Naive thymus-derived CD4-positive, alpha-beta T cell (primary cell): ENCODE measurements at regions of chr11 and their contacts with region 1.

Region 1: GRCh38 chr11:86291466-86292262 is 10.4 kb upstream of the HIKESHI start:
- DNase-seq: peak; percentile 11 to 63 (median 49)
- ATAC-seq: peak; percentile 76
- H3K4me3 ChIP-seq: no peak overlapping the region
- H3K4me3 Mint-ChIP-seq: peak overlapping the region in 1 of 10 donors; percentile 23
- H3K27ac ChIP-seq: no peak overlapping the region
- H3K27ac Mint-ChIP-seq: peak overlapping the region in 1 of 9 donors; percentile 35
- H3K4me1 ChIP-seq: peaks cover 0 to 27% of the 10 kb centered on the region in 2 donors
- H3K4me1 Mint-ChIP-seq: peaks cover 5 to 47% (median 9%) of the 10 kb centered on the region in 7 donors
- H3K27me3 ChIP-seq: no peaks in the 10 kb centered on the region
- H3K27me3 Mint-ChIP-seq: no peaks in the 10 kb centered on the region

Region 2: DNA sequence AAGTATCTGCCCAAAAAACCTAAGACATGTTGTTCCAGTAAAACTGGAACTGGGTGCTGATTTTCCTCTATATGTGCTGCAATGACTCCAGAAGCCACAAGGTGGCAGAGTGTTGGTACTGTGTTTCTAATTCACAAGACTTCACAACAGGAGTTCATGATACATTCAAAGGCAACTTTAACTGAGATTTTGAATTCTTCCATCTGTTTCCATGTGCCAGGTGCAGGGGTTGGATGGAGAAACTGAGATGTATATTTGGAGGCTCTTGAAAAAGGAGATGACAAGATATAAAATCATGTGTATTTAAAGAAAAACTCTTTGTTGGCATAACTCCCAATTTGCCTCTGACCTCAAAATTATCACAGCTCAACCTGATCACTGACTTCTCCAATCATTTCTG is 1906.9 kb before region 1 on chr11:
- CTCF ChIA-PET with region 1: no interaction called
- POLR2A ChIA-PET with region 1: no interaction called
- intact Hi-C with region 1: loop called in 1 of 2 experiments (anchors 10 kb)
- DNase-seq: peak in 5 of 9 donors; percentile 1 to 11 (median 3)
- ATAC-seq: no peak
- H3K4me3 ChIP-seq: no peak overlapping the region
- H3K4me3 Mint-ChIP-seq: no peak overlapping the region
- H3K27ac ChIP-seq: no peak overlapping the region
- H3K27ac Mint-ChIP-seq: no peak overlapping the region
- H3K4me1 ChIP-seq: no peaks in the 10 kb centered on the region
- H3K4me1 Mint-ChIP-seq: no peaks in the 10 kb centered on the region
- H3K27me3 ChIP-seq: no peaks in the 10 kb centered on the region
- H3K27me3 Mint-ChIP-seq: peaks cover 0 to 4% (median 0%) of the 10 kb centered on the region in 5 donors

Region 3: GRCh38 chr11:85941380-85941973 is 350.2 kb before region 1 on chr11:
- CTCF ChIA-PET with region 1: no interaction called
- POLR2A ChIA-PET with region 1: no interaction called
- intact Hi-C with region 1: loop called (anchors 1 kb)
- DNase-seq: no peak
- ATAC-seq: peak; percentile 61
- H3K4me3 ChIP-seq: no peak overlapping the region
- H3K4me3 Mint-ChIP-seq: no peak overlapping the region
- H3K27ac ChIP-seq: no peak overlapping the region
- H3K27ac Mint-ChIP-seq: no peak overlapping the region
- H3K4me1 ChIP-seq: no peaks in the 10 kb centered on the region
- H3K4me1 Mint-ChIP-seq: peaks cover 0 to 10% (median 0%) of the 10 kb centered on the region in 7 donors
- H3K27me3 ChIP-seq: no peaks in the 10 kb centered on the region
- H3K27me3 Mint-ChIP-seq: no peaks in the 10 kb centered on the region

Region 4: DNA sequence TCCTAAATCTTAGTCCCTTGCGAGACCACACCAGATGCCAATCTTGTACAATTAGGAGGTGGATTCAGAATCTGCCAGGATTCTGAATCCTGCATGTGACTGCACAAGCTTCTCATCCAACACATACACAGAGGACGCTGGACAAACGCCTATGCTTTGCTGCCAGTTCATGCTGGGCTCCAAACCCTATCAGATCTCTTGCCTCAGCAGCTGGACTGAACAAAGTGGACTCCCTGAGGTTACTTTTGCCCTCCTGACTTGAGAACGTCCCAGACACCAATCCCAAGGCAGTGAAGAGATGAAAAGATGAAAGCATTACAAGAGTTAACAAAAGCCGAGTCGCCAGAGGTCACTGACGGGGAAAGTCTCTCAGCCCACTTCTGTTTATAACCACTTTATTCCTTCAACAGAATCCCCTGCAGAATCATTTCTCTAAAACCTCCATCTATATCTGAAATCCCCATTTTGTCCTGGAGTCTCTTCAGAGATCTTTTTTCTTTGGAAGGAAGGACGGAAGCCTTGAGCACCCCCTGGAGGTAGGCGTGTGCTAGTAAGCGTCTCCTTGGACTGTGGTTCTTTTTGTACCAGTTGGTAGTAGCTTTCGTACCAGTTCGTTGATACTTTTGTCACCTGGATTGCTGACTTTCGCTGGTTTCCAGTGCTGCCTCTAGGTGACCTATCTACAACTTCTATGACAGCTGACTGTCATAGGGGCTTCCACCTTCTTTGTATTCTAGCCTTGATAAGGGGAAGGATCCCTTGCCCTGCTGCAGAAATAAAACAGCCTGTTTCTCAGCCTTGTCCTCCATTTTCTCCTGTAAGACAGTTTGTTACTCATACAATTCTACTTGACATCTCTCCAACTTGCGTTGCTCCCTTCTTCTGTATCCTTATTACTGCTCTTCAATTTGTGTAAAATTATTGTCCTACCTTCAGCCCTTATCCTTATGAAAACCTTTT is 73.3 kb before region 1 on chr11:
- CTCF ChIA-PET with region 1: no interaction called
- POLR2A ChIA-PET with region 1: no interaction called
- intact Hi-C with region 1: loop called in 1 of 2 experiments (anchors 1 kb)
- DNase-seq: peak in 8 of 9 donors; percentile 17 to 54 (median 42)
- ATAC-seq: peak; percentile 92
- H3K4me3 ChIP-seq: peak overlapping the region; percentile 32
- H3K4me3 Mint-ChIP-seq: peak overlapping the region; percentile 32 to 79 (median 67)
- H3K27ac ChIP-seq: no peak overlapping the region
- H3K27ac Mint-ChIP-seq: peak overlapping the region in 2 of 9 donors; percentile 44 to 45
- H3K4me1 ChIP-seq: no peaks in the 10 kb centered on the region
- H3K4me1 Mint-ChIP-seq: peaks cover 4 to 42% (median 12%) of the 10 kb centered on the region in 7 donors
- H3K27me3 ChIP-seq: no peaks in the 10 kb centered on the region
- H3K27me3 Mint-ChIP-seq: peaks cover 0 to 12% (median 5%) of the 10 kb centered on the region in 5 donors